ENCODE measurements at regions of chr9 and their contacts with region 1.

Region 1: GRCh38 chr9:16726718-16727451 is 143.6 kb downstream of the BNC2 start:
- DNase-seq: no peak
- ATAC-seq: peak; percentile 80
- H3K4me3 ChIP-seq: peak overlapping the region; percentile 45 to 62
- H3K27ac ChIP-seq: peak overlapping the region; percentile 87
- H3K4me1 ChIP-seq: no peaks in the 10 kb centered on the region; the same call in 1 of the 2 replicates
- H3K27me3 ChIP-seq: no peaks in the 10 kb centered on the region
- CTCF ChIP-seq: no peak

Region 2: DNA sequence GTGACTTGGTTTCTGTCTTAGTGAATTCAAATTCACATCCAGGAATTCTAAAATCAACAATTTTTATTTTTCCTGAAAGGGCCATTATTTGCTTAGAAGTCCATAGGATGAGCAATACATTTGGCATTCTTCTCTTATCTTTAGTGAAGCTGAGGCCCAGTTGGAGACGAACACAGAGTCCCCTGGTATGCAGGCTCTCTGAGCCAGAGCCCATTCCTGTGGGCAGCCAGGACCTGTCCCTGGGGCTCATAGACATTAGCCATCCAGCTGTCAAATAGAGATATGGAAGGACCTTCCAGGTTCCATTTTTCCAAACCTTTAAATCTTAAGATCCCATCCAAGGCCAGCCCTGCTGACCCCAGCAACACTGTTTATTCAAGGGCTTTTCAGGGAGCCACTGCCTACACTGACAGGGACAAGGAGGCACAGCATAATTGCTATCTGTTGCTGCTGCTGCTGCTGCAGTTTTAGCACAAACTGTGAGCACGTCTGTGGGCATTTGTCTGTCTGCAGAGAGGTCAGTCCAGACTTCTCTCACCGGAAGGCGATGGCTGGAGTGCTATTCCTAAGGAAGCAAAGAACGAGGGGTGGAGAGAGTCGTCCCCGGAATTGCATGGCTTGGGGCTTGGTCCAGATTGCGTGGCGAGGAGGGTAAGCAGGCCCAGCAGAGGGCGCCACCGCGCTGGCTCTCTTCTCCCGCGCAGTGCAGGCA is 535.0 kb before region 1 on chr9:
- CTCF ChIA-PET with region 1: no interaction called
- POLR2A ChIA-PET with region 1: no interaction called
- in situ Hi-C with region 1: no loop called
- intact Hi-C with region 1: loop called (anchors 5 kb)
- DNase-seq: peak; percentile 13
- ATAC-seq: peak; percentile 93
- H3K4me3 ChIP-seq: 0 out of 4 replicates have a peak overlapping the region, but pooled peaks of 1 of the 2 experiments have one; percentile 8
- H3K27ac ChIP-seq: no peak overlapping the region
- H3K4me1 ChIP-seq: no peaks in the 10 kb centered on the region
- H3K27me3 ChIP-seq: no peaks in the 10 kb centered on the region
- CTCF ChIP-seq: peak; percentile 68

Region 3: DNA sequence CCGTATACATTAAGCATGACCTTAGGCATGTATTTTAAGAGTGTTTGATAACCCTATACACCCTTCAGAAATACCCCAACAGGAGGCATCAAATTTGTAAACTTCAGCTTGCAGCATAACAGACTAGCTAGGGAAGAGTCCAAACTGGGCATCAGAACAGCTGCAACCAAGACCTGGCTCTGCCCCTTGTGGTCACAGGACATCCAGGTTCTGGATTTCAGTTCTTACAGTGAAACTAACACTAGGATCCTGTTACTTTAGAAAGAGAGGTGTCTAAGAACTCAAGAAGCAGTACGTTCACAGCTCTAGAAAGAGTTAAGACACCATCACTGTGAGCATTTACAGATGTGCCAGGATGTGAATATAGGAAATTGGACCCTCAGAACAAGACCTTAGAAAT is 86.2 kb before region 1 on chr9:
- CTCF ChIA-PET with region 1: no interaction called
- POLR2A ChIA-PET with region 1: no interaction called
- in situ Hi-C with region 1: no loop called
- intact Hi-C with region 1: no loop called
- DNase-seq: no peak
- ATAC-seq: peak; percentile 68
- H3K4me3 ChIP-seq: no peak overlapping the region
- H3K27ac ChIP-seq: peak overlapping the region; percentile 63; the same call in 1 of the 2 replicates
- H3K4me1 ChIP-seq: no peaks in the 10 kb centered on the region
- H3K27me3 ChIP-seq: no peaks in the 10 kb centered on the region
- CTCF ChIP-seq: peak; percentile 37

Region 4: GRCh38 chr9:16784002-16784401 is 57.1 kb after region 1 on chr9:
- CTCF ChIA-PET with region 1: no interaction called
- POLR2A ChIA-PET with region 1: no interaction called
- in situ Hi-C with region 1: no loop called
- intact Hi-C with region 1: no loop called
- DNase-seq: no peak
- ATAC-seq: no peak
- H3K4me3 ChIP-seq: no peak overlapping the region
- H3K27ac ChIP-seq: no peak overlapping the region
- H3K4me1 ChIP-seq: no peaks in the 10 kb centered on the region
- H3K27me3 ChIP-seq: no peaks in the 10 kb centered on the region
- CTCF ChIP-seq: no peak

Region 5: DNA sequence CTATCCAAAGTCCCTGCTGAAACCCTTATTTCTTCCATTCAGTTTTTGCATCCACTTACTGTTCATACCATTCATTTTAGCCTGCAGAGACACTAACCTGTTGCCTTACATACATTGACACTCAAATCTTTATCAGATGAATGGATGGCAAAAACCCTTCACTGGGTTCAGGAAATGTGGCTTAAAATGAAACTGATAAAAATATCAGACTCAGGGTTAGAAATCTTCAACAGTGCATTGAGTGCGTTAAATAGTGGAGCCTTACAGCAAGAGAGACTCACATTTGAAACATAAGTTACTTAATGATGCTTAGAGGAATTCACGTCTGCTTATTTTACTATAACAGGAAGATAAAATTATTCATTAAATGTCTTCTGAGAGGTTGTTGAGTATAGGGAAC is 171.6 kb after region 1 on chr9:
- CTCF ChIA-PET with region 1: no interaction called
- POLR2A ChIA-PET with region 1: no interaction called
- in situ Hi-C with region 1: no loop called
- intact Hi-C with region 1: no loop called
- DNase-seq: no peak
- ATAC-seq: no peak
- H3K4me3 ChIP-seq: no peak overlapping the region
- H3K27ac ChIP-seq: no peak overlapping the region
- H3K4me1 ChIP-seq: no peaks in the 10 kb centered on the region
- H3K27me3 ChIP-seq: no peaks in the 10 kb centered on the region
- CTCF ChIP-seq: no peak